HCT116 (cell line): ENCODE measurements at regions of chrX and their contacts with region 1.

Region 1: GRCh38 chrX:39283239-39283638 is 482.0 kb downstream of the MID1IP1 start:
- DNase-seq: no peak
- ATAC-seq: no peak
- H3K4me3 ChIP-seq: no peak overlapping the region
- H3K27ac ChIP-seq: no peak overlapping the region
- H3K4me1 ChIP-seq: no peaks in the 10 kb centered on the region
- H3K27me3 ChIP-seq: no peaks in the 10 kb centered on the region
- CTCF ChIP-seq: no peak
- POLR2A ChIP-seq: no peak
- RAD21 ChIP-seq: no peak

Region 2: DNA sequence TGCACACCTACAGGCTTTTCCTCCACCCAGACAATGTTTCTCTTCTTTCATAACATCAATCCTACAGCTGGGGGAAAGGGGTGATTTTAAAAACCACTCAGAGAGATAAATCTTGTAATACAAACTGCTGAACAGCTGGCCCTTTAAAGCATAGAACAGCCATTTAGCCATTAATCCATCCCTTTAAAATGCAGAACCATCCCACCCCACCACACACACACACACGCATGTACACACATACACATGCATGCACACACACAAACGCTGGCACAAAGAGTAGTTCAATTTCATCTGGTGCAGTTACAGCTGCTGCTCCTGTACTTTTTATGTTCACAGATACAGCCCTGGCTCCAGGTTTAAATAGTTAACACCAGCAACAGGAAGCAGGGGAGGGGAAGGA is 55.9 kb before region 1 on chrX:
- CTCF ChIA-PET with region 1: no interaction called
- POLR2A ChIA-PET with region 1: no interaction called
- RAD21 ChIA-PET with region 1: no interaction called
- intact Hi-C with region 1: no loop called
- DNase-seq: no peak
- ATAC-seq: no peak
- H3K4me3 ChIP-seq: no peak overlapping the region
- H3K27ac ChIP-seq: no peak overlapping the region
- H3K4me1 ChIP-seq: no peaks in the 10 kb centered on the region
- H3K27me3 ChIP-seq: no peaks in the 10 kb centered on the region
- CTCF ChIP-seq: no peak
- POLR2A ChIP-seq: no peak
- RAD21 ChIP-seq: no peak

Region 3: DNA sequence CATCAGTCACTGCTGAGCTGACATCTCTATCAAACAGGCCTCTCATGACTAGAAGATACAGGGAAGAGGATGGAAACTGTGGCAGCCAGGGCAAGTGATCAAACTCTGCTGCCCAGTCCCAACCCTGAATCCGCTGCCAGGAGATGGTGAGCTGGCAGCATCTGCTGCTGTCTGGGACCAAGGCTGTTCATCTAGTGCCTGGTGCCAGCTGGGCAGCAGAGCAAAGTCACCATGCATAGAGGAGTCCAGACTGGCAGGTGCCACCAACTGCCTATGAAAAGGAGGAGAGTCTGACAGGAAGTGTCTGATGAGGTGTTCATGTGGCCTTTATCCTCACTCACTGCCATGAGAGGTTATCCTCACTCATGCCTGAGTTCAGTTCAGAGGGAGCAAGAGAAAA is 36.9 kb after region 1 on chrX:
- CTCF ChIA-PET with region 1: no interaction called
- POLR2A ChIA-PET with region 1: no interaction called
- RAD21 ChIA-PET with region 1: no interaction called
- intact Hi-C with region 1: no loop called
- DNase-seq: no peak
- ATAC-seq: no peak
- H3K4me3 ChIP-seq: no peak overlapping the region
- H3K27ac ChIP-seq: no peak overlapping the region
- H3K4me1 ChIP-seq: no peaks in the 10 kb centered on the region
- H3K27me3 ChIP-seq: no peaks in the 10 kb centered on the region
- CTCF ChIP-seq: no peak
- POLR2A ChIP-seq: no peak
- RAD21 ChIP-seq: no peak

Region 4: GRCh38 chrX:39331082-39331704 is 48.0 kb after region 1 on chrX:
- CTCF ChIA-PET with region 1: no interaction called
- POLR2A ChIA-PET with region 1: no interaction called
- RAD21 ChIA-PET with region 1: no interaction called
- intact Hi-C with region 1: loop called (anchors 5 kb)
- DNase-seq: no peak
- ATAC-seq: no peak
- H3K4me3 ChIP-seq: no peak overlapping the region
- H3K27ac ChIP-seq: no peak overlapping the region
- H3K4me1 ChIP-seq: no peaks in the 10 kb centered on the region
- H3K27me3 ChIP-seq: peaks cover 5% of the 10 kb centered on the region; the same call in 1 of the 2 replicates
- CTCF ChIP-seq: no peak
- POLR2A ChIP-seq: no peak
- RAD21 ChIP-seq: no peak